HEK293T (cell line): ENCODE measurements at regions of chr12 and their contacts with region 1.

Region 1: DNA sequence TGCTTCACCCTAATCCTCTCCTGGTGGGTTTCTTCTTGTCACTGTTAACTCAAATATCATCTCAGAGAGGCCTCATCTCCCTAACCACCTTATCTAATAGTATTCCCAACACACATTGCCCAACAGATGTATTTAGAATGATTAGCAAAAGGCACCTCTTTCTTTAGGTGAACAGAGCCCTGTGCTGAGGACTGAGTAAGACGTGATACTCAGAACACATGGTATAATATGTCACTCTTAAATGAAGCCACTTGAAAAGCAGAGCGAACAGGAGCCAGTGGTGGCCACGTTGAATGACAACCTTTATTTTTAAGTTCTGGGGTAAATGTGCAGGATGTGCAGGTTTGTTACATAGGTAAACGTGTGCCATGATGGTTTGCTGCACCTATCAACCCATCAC is 1.5 kb upstream of the KSR2 start:
- DNase-seq: no peak

Region 2: DNA sequence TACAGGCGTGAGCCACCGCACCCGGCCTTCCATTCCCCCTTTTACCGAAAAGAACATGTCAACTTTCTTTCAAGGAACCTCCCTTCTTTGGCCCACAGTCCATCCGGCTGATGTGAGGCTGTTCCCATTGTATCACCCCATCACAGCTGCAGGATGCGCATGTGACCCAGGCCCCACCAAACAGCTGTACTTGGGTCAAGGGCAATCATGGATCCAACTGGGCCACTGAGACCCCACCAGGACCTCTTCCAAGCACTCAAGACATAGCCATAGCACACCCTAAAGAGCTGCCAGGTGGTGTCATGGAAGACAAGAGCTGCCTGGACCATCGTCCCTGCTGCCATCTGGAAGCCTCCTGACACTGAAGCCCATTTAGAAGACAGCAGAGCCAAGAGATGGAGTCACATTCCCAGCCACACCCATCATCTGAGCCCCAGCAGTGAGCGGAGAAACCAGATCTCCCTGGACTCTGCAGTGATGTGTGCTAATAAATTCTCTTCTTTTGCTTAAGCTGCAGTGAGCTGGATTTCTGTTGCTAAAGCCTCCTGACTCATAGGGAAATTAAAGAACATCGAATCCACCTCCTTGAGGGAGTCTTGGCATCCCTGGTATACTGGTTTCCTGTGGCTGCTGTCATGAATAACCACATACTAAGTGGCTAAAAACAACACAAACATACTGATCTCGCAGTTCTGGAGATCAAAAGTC is 107.2 kb before region 1 on chr12:
- CTCF ChIA-PET with region 1: no interaction called
- POLR2A ChIA-PET with region 1: no interaction called
- DNase-seq: no peak

Region 3: DNA sequence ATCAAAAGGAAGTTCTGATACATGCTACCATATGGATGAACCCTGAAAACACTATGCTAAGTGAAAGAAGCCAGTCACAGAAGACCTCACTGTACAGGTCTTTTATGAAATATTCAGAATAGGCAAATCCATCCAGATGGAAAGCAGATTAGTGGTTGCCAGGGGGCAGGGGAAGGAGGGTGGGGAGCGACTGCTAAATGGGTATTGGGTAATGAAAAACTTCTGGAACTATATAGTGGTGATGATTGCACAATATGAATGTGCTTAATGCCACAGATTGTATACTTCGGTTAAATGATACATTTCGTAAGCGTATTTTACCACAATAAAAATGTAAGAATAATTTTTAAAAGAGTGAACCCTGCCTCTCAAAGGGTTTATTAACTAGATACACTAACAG is 10.3 kb after region 1 on chr12:
- CTCF ChIA-PET with region 1: interaction called, 12 read pairs
- POLR2A ChIA-PET with region 1: no interaction called
- DNase-seq: no peak